ENCODE measurements at regions of chr19 and their contacts with region 1.

Region 1: GRCh38 chr19:1315470-1316231 is 30.0 kb downstream of the EFNA2 start:
- DNase-seq: peak; percentile 95
- H3K4me3 ChIP-seq: peak overlapping the region in 1 of 2 experiments; percentile 27; a peak in 3 of 4 replicates
- H3K27ac ChIP-seq: no peak overlapping the region
- H3K4me1 ChIP-seq: peaks cover 6 to 7% of the 10 kb centered on the region in 2 experiments; a peak in 2 of 4 replicates
- H3K27me3 ChIP-seq: no peaks in the 10 kb centered on the region
- CTCF ChIP-seq: peak; percentile 64
- EP300 ChIP-seq: no peak
- RAD21 ChIP-seq: peak; percentile 73

Region 2: GRCh38 chr19:1275260-1275975 is 40.2 kb before region 1 on chr19 and contains the start of gene FAM174C:
- CTCF ChIA-PET with region 1: interaction called, 10 read pairs
- POLR2A ChIA-PET with region 1: no interaction called
- DNase-seq: peak; percentile 97
- H3K4me3 ChIP-seq: peak within 1 kb of the TSS; percentile 72 to 76
- H3K27ac ChIP-seq: peak within 1 kb of the TSS; percentile 92 to 99
- H3K4me1 ChIP-seq: peaks cover 28 to 42% of the 10 kb centered on the region in 2 experiments; a peak in 1 of 4 replicates
- H3K27me3 ChIP-seq: no peaks in the 10 kb centered on the region
- CTCF ChIP-seq: no peak
- EP300 ChIP-seq: no peak
- RAD21 ChIP-seq: no peak
- polyA plus RNA-seq, gene FAM174C: 53.5 and 78.0 TPM in 2 replicates

Region 3: GRCh38 chr19:1336079-1336684 is 20.5 kb after region 1 on chr19:
- CTCF ChIA-PET with region 1: interaction called, 11 read pairs
- POLR2A ChIA-PET with region 1: no interaction called
- DNase-seq: no peak
- H3K4me3 ChIP-seq: no peak overlapping the region
- H3K27ac ChIP-seq: no peak overlapping the region
- H3K4me1 ChIP-seq: no peaks in the 10 kb centered on the region
- H3K27me3 ChIP-seq: no peaks in the 10 kb centered on the region
- CTCF ChIP-seq: no peak
- EP300 ChIP-seq: no peak
- RAD21 ChIP-seq: no peak

Region 4: GRCh38 chr19:1355568-1356507 is 40.2 kb after region 1 on chr19:
- CTCF ChIA-PET with region 1: interaction called, 23 read pairs
- POLR2A ChIA-PET with region 1: no interaction called
- DNase-seq: peak; percentile 56
- H3K4me3 ChIP-seq: peak overlapping the region; percentile 65 to 79
- H3K27ac ChIP-seq: peak overlapping the region; percentile 21 to 81; a peak in 3 of 4 replicates
- H3K4me1 ChIP-seq: peaks cover 9 to 36% of the 10 kb centered on the region in 2 experiments
- H3K27me3 ChIP-seq: no peaks in the 10 kb centered on the region
- CTCF ChIP-seq: no peak
- EP300 ChIP-seq: no peak
- RAD21 ChIP-seq: no peak

Region 5: GRCh38 chr19:1373534-1374249 is 58.0 kb after region 1 on chr19:
- CTCF ChIA-PET with region 1: interaction called, 81 read pairs
- POLR2A ChIA-PET with region 1: no interaction called
- DNase-seq: no peak
- H3K4me3 ChIP-seq: no peak overlapping the region
- H3K27ac ChIP-seq: no peak overlapping the region
- H3K4me1 ChIP-seq: no peaks in the 10 kb centered on the region
- H3K27me3 ChIP-seq: no peaks in the 10 kb centered on the region
- CTCF ChIP-seq: no peak
- EP300 ChIP-seq: no peak
- RAD21 ChIP-seq: no peak

Measured in SK-N-SH (cell line).